Activated B cell treated with CpG ODN at 0.5 μM for 24 hours (primary cell): ENCODE measurements at regions of chr1 and their contacts with region 1.

Region 1: GRCh38 chr1:169711469-169712281 is at the start of gene SELL:
- DNase-seq: no peak
- ATAC-seq: peak; percentile 78
- H3K4me3 Mint-ChIP-seq: peak within 1 kb of the TSS; percentile 90
- H3K27ac Mint-ChIP-seq: peak within 1 kb of the TSS; percentile 97
- H3K4me1 Mint-ChIP-seq: peaks cover 41% of the 10 kb centered on the region
- H3K27me3 Mint-ChIP-seq: no peaks in the 10 kb centered on the region
- CTCF ChIP-seq: peak; percentile 77
- total RNA-seq, gene SELL: 151 and 156 TPM in 2 replicates

Region 2: DNA sequence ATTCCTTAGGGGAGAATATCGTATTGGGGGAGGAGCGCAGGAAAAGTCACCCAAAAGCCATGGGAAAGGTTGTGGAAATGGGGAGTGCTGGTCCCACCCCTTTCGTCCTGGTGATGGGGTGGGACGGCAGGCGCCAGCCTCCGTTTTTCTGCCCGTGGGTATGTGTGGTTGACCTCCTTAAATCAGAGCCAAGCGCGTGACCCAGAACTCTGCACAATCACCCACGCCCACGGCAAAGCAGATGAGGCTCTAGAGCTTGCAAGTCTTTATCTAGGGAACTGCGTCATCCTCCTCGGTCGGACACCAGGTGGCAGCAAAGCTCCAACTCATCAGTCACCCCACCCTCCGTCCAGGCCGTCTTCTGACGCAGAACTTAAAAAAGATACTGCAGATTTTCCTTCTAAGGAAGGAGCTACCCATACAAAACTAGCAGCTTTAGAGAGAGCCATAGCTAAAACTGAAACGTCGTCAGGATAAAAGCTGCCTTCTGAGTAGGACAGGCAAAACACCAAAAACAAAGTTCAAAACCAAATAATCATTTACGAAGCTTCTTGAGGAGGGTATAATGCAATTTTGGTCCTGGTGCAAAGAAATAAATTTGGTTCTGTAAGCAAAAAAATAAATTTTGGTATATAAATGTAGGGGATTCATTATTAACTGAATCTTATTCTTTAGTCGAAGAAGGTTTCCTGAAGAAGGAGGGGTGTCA is 1368.9 kb before region 1 on chr1:
- CTCF ChIA-PET with region 1: no interaction called
- POLR2A ChIA-PET with region 1: no interaction called
- intact Hi-C with region 1: loop called (anchors 10 kb)
- DNase-seq: peak; percentile 65
- ATAC-seq: peak; percentile 100
- H3K4me3 Mint-ChIP-seq: no peak overlapping the region
- H3K27ac Mint-ChIP-seq: no peak overlapping the region
- H3K4me1 Mint-ChIP-seq: peaks cover 9% of the 10 kb centered on the region
- H3K27me3 Mint-ChIP-seq: no peaks in the 10 kb centered on the region
- CTCF ChIP-seq: no peak

Region 3: DNA sequence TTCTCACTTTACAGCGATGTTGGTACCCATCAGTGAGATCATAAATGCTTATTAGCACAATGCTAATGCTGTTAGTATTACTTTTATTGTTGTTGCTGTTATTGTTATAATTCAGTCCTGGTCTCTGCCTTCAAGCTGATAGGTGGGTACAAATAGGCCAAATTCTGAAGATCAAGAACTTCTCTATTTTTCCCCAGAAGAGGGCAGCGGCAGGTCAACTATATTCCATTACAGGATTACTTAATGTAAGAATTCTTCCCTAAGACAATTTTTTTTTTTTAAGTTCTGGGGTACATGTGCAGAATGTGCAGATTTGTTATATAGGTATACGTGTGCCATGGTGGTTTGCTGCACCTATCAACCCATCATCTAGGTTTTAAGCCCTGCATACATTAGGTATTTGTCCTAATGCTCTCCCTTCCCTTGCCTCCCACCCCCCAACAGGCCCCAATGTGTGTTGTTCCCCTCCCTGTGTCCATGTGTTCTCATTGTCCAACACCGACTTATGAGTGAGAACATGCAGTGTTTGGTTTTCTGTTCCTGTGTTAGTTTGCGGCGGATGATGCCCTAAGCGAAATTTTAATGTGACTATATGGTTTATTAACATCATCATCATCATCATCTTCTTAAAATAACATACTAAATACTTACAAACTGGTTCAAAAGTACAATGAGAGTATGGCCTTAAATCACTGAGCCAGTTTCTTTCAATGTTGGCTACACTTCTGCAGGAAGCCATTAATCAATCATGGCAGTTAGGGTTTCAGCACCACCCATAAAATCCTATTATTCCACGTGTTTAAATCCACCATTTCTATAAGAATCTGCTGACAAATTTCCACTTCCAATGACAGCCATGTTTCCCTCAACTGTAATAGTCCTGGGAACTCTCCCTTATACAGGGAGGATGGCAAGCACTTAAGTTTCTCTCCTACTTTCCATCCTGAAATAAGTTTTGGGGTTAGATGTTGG is 245.1 kb before region 1 on chr1:
- CTCF ChIA-PET with region 1: interaction called, 4 read pairs
- POLR2A ChIA-PET with region 1: no interaction called
- intact Hi-C with region 1: loop called (anchors 1 kb)
- DNase-seq: no peak
- ATAC-seq: no peak
- H3K4me3 Mint-ChIP-seq: no peak overlapping the region
- H3K27ac Mint-ChIP-seq: no peak overlapping the region
- H3K4me1 Mint-ChIP-seq: no peaks in the 10 kb centered on the region
- H3K27me3 Mint-ChIP-seq: no peaks in the 10 kb centered on the region
- CTCF ChIP-seq: no peak

Region 4: DNA sequence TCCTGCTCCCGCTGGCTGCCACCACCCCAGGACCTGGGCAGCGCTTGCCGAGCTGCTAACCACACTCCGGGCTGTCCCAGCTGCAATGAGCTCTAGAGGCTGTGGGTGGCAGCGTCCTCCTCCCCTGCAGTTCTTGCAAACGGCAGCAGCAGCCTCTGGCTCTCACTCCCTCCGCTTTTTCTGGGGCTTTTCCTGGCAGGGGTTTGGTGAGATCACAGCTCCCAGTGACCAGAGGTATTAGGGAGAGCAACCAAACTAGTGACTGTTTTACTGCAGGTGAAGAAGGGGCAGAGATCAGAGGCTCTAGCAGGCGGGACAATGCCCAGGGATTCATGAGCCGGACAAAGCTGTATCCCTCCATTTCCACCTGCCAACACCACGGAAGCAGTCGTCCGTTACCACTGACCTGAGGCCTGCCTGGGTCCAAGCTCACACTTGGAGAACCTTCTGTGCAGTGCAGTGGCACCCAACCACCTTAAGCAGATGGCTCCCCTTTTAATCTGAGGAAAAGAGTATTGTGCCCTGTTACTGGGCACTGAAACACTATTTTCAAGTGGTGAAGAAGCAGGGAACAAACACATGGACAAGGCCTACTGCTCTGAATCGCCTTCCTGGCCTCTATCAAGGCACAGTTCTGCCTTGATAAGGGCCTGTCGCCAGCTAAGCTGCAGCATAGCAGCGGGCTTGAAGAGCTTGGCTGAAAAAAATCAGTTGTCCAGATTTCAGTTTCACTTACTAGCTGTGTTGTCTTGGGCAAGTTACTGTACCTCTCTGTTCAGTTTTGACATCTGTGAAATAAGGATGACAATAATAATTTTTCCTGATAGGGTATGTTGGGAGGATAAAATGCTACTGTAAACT is 125.0 kb before region 1 on chr1 and contains the start of gene F5:
- CTCF ChIA-PET with region 1: interaction called, 46 read pairs
- POLR2A ChIA-PET with region 1: interaction called, 3 read pairs
- intact Hi-C with region 1: loop called (anchors 1 kb)
- DNase-seq: peak; percentile 40
- ATAC-seq: peak; percentile 98
- H3K4me3 Mint-ChIP-seq: peak within 1 kb of the TSS; percentile 66
- H3K27ac Mint-ChIP-seq: no peak within 1 kb of the TSS
- H3K4me1 Mint-ChIP-seq: peaks cover 7% of the 10 kb centered on the region
- H3K27me3 Mint-ChIP-seq: peaks cover 18% of the 10 kb centered on the region
- CTCF ChIP-seq: no peak
- total RNA-seq, gene F5: 0.66 and 0.67 TPM in 2 replicates

Region 5: GRCh38 chr1:169670836-169671235 is 40.8 kb before region 1 on chr1:
- CTCF ChIA-PET with region 1: interaction called, 6 read pairs
- POLR2A ChIA-PET with region 1: interaction called, 4 read pairs
- intact Hi-C with region 1: loop called (anchors 1 kb)
- DNase-seq: no peak
- ATAC-seq: no peak
- H3K4me3 Mint-ChIP-seq: peak overlapping the region; percentile 20
- H3K27ac Mint-ChIP-seq: peak overlapping the region; percentile 77
- H3K4me1 Mint-ChIP-seq: peaks cover 66% of the 10 kb centered on the region
- H3K27me3 Mint-ChIP-seq: no peaks in the 10 kb centered on the region
- CTCF ChIP-seq: no peak

Region 6: DNA sequence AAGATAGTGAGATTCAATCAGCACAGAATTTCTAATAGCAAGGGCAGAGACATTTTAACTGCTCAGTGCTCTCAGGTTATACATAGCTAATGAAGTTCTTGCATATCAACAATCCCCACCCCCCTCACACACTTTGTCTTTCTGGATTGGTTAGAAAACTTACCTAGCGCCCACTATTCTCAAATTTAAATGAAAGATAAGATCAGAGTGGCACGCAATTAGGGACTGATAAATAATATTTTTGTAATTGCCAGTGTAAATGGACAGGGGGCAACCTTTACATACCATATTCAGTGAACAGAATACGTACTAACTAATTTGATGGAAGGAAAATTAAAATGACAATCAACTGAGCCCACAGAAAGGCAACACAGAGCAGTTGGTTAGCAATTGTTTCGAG is 12.0 kb before region 1 on chr1:
- CTCF ChIA-PET with region 1: interaction called, 39 read pairs
- POLR2A ChIA-PET with region 1: interaction called, 57 read pairs
- intact Hi-C with region 1: loop called (anchors 1 kb)
- DNase-seq: no peak
- ATAC-seq: no peak
- H3K4me3 Mint-ChIP-seq: no peak overlapping the region
- H3K27ac Mint-ChIP-seq: peak overlapping the region; percentile 90
- H3K4me1 Mint-ChIP-seq: peaks cover 96% of the 10 kb centered on the region
- H3K27me3 Mint-ChIP-seq: no peaks in the 10 kb centered on the region
- CTCF ChIP-seq: no peak

Region 7: GRCh38 chr1:169893494-169894362 is 182.1 kb after region 1 on chr1 and contains the start of gene SCYL3:
- CTCF ChIA-PET with region 1: interaction called, 5 read pairs
- POLR2A ChIA-PET with region 1: interaction called, 3 read pairs
- intact Hi-C with region 1: loop called (anchors 5 kb)
- DNase-seq: peak; percentile 82
- ATAC-seq: peak; percentile 87
- H3K4me3 Mint-ChIP-seq: peak within 1 kb of the TSS; percentile 88
- H3K27ac Mint-ChIP-seq: peak within 1 kb of the TSS; percentile 100
- H3K4me1 Mint-ChIP-seq: peaks cover 40% of the 10 kb centered on the region
- H3K27me3 Mint-ChIP-seq: peaks cover 4% of the 10 kb centered on the region
- CTCF ChIP-seq: no peak
- total RNA-seq, gene SCYL3: 14.5 and 16.2 TPM in 2 replicates

Region 8: GRCh38 chr1:170267316-170267715 is 555.6 kb after region 1 on chr1:
- CTCF ChIA-PET with region 1: no interaction called
- POLR2A ChIA-PET with region 1: no interaction called
- intact Hi-C with region 1: no loop called
- DNase-seq: no peak
- ATAC-seq: no peak
- H3K4me3 Mint-ChIP-seq: no peak overlapping the region
- H3K27ac Mint-ChIP-seq: no peak overlapping the region
- H3K4me1 Mint-ChIP-seq: no peaks in the 10 kb centered on the region
- H3K27me3 Mint-ChIP-seq: no peaks in the 10 kb centered on the region
- CTCF ChIP-seq: no peak